ENCODE measurements at regions of chr4 and their contacts with region 1.

Region 1: DNA sequence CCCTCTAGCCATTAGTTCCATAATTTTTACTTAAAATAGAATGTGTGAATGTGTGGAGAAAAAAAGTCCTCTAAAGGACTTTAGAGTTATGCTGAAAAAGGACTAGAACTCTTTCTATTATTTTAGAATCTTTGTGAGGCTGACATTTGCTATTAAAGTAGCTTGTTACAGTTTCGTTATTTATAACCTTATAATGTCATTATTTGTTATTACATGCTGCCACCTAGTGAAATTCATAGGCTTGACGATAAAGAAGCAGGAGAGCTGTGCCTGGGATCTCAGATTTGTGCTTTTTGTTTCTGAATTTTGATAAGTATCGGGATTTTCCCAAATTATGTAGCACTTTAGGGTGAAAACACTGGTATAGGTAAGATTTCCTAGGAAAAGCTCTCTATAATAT is 38.5 kb upstream of the TAPT1 start:
- DNase-seq: no peak
- H3K4me3 ChIP-seq: no peak overlapping the region
- H3K27ac ChIP-seq: no peak overlapping the region
- H3K27me3 ChIP-seq: no peaks in the 10 kb centered on the region
- CTCF ChIP-seq: peak; percentile 53 to 93 (median 70)

Region 2: DNA sequence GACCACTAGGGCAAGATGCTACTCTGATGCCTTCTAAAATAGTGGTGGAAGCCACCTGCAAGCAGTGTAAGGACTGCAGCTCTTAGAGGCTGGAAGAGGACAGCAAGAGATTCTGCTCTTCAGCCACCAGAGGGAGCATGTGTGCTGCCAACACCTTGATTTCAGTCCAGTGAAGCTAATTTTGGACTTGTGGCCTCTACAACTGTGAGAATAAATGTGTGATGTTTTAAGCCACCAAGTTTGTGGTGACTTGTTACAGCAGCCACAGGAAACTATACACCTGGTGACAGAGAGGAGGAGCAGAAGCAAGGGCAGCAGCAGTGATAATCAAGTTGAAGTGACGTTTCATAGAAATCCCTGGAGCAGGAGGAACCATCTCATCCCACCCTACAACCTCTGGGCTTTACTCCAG is 382.1 kb before region 1 on chr4:
- intact Hi-C with region 1: loop called in 1 of 2 experiments (anchors 10 kb)
- DNase-seq: peak in 4 of 10 donors; percentile 20 to 58 (median 22)
- H3K4me3 ChIP-seq: no peak overlapping the region
- H3K27ac ChIP-seq: no peak overlapping the region
- H3K27me3 ChIP-seq: peaks cover 0 to 4% (median 0%) of the 10 kb centered on the region in 45 donors
- CTCF ChIP-seq: peak; percentile 67 to 94 (median 87)

Region 3: DNA sequence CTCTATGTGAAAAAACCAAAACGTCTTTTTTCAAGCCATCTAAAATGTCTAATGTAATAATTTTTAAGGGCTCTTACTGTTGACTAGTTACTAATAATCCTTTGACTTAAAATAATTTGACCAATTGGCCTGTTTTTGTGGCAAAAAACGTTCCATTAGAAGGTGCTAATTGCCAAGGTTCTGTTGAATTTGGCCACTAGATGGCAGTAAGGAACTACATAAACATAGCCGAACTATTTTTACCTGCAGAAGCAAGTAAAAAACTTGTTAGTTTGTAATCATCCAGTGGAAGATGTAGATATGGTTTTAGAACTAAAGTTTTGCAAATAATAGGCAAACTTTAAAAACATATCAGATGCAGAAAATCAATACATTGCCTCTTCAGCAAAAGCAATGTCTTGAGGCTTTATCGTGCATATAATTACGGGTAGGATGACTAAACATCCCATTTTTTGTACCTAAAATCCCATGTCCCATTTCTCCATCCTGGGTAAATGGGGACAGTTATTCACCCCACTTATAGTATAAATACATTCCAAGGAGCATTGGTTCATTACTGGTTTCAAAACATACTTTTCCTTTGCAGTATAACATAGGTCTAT is 238.5 kb before region 1 on chr4:
- intact Hi-C with region 1: loop called (anchors 2 kb)
- DNase-seq: peak in 1 of 10 donors; percentile 21
- H3K4me3 ChIP-seq: peak overlapping the region in 25 of 59 donors; percentile 2 to 50 (median 21)
- H3K27ac ChIP-seq: peak overlapping the region in 1 of 59 donors; percentile 22
- H3K27me3 ChIP-seq: no peaks in the 10 kb centered on the region
- CTCF ChIP-seq: peak; percentile 66 to 99 (median 94)

Region 4: GRCh38 chr4:16196478-16197393 is 68.1 kb before region 1 on chr4:
- intact Hi-C with region 1: loop called in 1 of 2 experiments (anchors 5 kb)
- DNase-seq: no peak
- H3K4me3 ChIP-seq: peak overlapping the region in 38 of 59 donors; percentile 2 to 51 (median 25)
- H3K27ac ChIP-seq: peak overlapping the region in 26 of 59 donors; percentile 1 to 66 (median 30)
- H3K27me3 ChIP-seq: no peaks in the 10 kb centered on the region
- CTCF ChIP-seq: peak; percentile 20 to 79 (median 56)

Region 5: DNA sequence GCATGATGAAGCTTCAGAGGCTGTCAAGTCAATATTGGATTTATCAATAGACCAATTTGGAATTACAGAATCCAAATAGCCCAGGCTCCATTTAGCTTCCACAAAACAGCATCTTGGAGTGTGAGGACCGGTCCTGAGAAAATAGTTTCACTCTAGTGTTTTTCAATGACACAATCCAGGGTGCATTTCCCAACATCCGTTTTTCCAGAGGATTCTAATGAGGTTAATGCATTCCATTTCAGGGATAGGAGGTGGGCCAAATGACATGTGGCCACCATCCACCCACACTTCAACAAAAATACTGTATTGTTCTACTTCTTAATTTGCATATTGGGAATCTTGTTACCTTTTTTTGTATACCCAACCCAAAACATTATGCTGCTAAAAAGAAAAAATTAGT is 863.5 kb after region 1 on chr4:
- intact Hi-C with region 1: no loop called
- DNase-seq: no peak
- H3K4me3 ChIP-seq: no peak overlapping the region
- H3K27ac ChIP-seq: no peak overlapping the region
- H3K27me3 ChIP-seq: no peaks in the 10 kb centered on the region
- CTCF ChIP-seq: no peak